Right ventricle myocardium inferior (tissue), 1 donor: ENCODE measurements at regions of chr19 and their contacts with region 1.

Region 1: DNA sequence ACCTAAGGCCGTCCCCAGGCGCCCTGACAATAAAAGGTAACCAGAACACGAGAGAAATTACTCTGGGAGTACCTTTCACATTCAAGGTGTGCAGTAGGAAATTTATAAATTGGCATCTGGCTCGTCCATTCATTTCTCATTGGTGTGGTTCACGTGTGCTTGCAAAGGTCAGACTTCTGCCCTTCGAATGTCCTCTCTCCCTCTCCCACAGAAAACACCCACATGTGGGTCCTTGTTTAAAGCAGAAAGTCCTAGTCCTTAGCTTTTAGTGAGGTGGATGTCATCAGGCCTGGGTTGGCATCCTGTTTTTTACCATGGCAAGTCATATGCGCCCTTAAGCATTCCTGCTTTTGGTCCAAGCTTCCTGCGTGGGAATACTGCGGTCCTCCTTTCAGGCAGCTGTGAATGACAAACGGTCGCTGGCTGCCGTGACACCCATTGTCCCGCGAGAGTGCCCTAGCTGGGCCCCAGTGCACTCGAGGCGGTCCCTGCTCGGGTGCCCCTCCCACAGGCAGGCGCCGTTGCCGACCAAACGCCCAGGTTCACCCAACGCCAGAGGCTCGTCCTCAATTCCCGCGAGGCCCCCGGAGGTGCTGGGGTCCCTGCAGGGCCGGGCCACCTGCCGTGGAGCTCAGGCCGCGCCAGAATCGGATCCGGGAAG is at the start of gene NUDT19:
- DNase-seq: peak; percentile 92
- ATAC-seq: peak; percentile 95
- total RNA-seq, gene NUDT19: 23.8 TPM

Region 2: GRCh38 chr19:32373585-32374295 is 317.7 kb before region 1 on chr19:
- intact Hi-C with region 1: no loop called
- DNase-seq: no peak
- ATAC-seq: peak; percentile 90

Region 3: GRCh38 chr19:32580901-32581703 is 110.3 kb before region 1 on chr19 and contains the start of gene PDCD5:
- intact Hi-C with region 1: loop called (anchors 5 kb)
- DNase-seq: peak; percentile 99
- ATAC-seq: peak; percentile 99
- total RNA-seq, gene PDCD5: 133 TPM

Region 4: DNA sequence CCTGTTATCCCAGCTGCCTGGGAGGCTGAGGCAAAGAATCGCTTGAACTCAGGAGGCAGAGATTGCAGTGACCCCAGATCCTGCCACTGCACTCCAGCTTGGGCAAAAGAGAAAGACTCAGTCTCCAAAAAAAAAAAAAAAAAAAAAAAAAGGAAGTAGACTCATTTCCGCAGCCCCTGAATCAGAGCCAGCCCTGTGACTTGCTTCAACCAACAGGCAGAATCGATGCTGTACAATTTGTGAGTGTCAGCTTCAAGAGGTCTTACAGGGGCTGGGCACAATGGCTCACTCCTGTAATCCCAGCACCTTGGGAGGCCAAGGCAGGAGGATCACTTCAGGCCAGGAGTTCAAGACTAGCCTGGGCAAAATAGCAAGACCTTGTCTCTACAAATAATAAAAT is 29.2 kb before region 1 on chr19:
- intact Hi-C with region 1: no loop called
- DNase-seq: peak; percentile 37
- ATAC-seq: no peak

Region 5: DNA sequence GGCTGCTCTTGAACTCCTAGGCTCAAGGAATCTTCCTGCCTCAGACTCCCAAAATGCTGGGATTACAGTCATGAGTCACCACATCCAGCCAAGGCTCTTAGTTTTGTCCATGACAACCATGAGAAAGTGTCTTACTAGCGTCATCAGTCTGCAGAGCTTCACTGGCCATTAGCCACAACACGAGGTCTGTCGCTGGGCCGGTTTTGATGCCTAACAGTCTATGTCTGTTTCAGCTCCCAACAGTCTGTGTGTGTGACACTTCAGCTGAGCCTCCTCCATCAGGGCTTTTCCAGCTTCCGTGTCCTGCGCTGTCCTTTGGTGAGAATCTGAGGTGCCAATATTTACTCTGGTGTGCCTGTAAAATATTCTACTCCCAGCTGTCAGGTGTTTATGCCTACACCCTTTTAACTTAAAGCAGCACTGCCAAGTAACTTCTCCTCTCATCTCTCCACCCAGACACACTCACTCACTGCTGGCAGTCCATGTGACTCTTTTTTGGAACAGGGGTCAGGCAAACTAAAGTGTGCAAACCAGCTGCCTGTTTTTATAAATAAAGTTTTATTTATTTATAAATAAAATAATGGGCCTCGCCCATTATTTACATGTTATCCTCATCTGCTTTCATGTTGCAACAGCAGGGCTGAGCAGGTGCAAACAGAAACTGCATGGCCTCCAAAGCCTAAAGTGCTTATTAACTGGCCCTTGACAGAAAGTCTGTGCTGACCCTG is 232.9 kb after region 1 on chr19:
- intact Hi-C with region 1: no loop called
- DNase-seq: no peak
- ATAC-seq: no peak

Region 6: DNA sequence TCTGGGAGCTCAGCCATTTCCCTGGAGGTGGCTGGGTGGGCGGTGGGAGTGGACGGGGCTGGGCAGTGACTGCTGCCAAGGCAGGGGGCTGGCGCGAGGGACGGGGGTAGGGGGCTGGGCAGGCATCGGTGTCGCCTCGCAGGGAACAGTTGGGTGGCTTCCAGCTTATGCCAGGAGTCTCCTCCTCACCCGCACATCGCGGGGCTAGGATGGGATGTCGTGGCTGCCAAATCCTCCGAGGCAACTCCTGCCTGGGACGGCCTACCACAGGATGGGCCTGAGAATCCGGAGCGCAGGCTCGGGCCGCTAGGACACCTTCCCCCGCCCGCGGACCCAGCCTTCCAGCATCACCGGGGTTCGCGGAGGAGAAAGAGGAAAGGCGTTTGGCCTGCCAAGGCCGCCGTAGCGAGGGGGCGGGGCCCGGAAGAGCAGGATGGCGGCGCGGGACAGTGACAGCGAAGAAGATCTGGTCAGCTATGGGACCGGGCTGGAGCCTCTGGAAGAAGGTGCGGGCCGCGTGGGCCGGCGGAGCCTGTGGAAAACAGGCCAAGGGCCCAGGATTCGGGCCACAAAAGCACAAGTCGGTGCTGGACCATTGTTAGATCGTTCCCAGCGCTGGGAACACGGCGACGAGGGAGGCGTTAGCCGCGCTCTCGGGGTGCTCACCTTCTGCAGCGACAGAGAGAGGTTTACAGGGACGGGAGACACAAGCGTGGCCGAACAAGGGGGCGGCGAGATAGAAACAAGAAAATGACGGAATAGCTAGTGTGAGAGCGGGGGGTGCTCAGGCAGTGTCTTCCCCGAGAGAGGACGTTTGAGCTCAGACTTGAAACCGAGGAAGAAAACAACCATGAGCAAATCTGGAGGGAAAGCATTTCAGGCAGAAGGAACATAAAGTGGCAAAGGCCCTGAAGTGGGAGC is 389.6 kb after region 1 on chr19 and contains the start of gene GPATCH1:
- intact Hi-C with region 1: no loop called
- DNase-seq: peak; percentile 96
- ATAC-seq: peak; percentile 96
- total RNA-seq, gene GPATCH1: 6.5 TPM